ENCODE measurements at regions of chr7 and their contacts with region 1.

Region 1: GRCh38 chr7:131007394-131008330 is 273.7 kb upstream of the KLF14 start:
- DNase-seq: peak; percentile 71
- H3K4me3 ChIP-seq: no peak overlapping the region
- H3K27ac ChIP-seq: peak overlapping the region; percentile 24
- H3K4me1 ChIP-seq: peaks cover 6% of the 10 kb centered on the region
- H3K27me3 ChIP-seq: no peaks in the 10 kb centered on the region
- CTCF ChIP-seq: peak; percentile 47 to 49
- POLR2A ChIP-seq: no peak

Region 2: GRCh38 chr7:130996841-130997231 is 10.8 kb before region 1 on chr7:
- CTCF ChIA-PET with region 1: interaction called, 13 read pairs
- POLR2A ChIA-PET with region 1: no interaction called
- dilution Hi-C with region 1: no loop called
- intact Hi-C with region 1: no loop called
- DNase-seq: peak; percentile 78
- H3K4me3 ChIP-seq: no peak overlapping the region
- H3K27ac ChIP-seq: no peak overlapping the region
- H3K4me1 ChIP-seq: peaks cover 14% of the 10 kb centered on the region
- H3K27me3 ChIP-seq: peaks cover 14 to 26% of the 10 kb centered on the region in 2 experiments
- CTCF ChIP-seq: no peak
- POLR2A ChIP-seq: no peak

Region 3: GRCh38 chr7:131538071-131538790 is 530.6 kb after region 1 on chr7:
- CTCF ChIA-PET with region 1: no interaction called
- POLR2A ChIA-PET with region 1: no interaction called
- dilution Hi-C with region 1: no loop called
- intact Hi-C with region 1: no loop called
- DNase-seq: peak; percentile 32
- H3K4me3 ChIP-seq: no peak overlapping the region
- H3K27ac ChIP-seq: peak overlapping the region; percentile 72
- H3K4me1 ChIP-seq: peaks cover 39% of the 10 kb centered on the region
- H3K27me3 ChIP-seq: no peaks in the 10 kb centered on the region
- CTCF ChIP-seq: no peak
- POLR2A ChIP-seq: no peak